Caco-2 (cell line): ENCODE measurements at regions of chrX and their contacts with region 1.

Region 1: GRCh38 chrX:132071260-132071659 is 48.2 kb downstream of the STK26 start:
- DNase-seq: no peak
- H3K4me3 ChIP-seq: no peak overlapping the region
- H3K4me3 Mint-ChIP-seq: no peak overlapping the region
- H3K27ac Mint-ChIP-seq: no peak overlapping the region
- H3K4me1 ChIP-seq: no peaks in the 10 kb centered on the region
- H3K4me1 Mint-ChIP-seq: no peaks in the 10 kb centered on the region
- H3K27me3 ChIP-seq: no peaks in the 10 kb centered on the region
- H3K27me3 Mint-ChIP-seq: no peaks in the 10 kb centered on the region
- CTCF ChIP-seq: peak in 1 of 2 experiments; percentile 12

Region 2: DNA sequence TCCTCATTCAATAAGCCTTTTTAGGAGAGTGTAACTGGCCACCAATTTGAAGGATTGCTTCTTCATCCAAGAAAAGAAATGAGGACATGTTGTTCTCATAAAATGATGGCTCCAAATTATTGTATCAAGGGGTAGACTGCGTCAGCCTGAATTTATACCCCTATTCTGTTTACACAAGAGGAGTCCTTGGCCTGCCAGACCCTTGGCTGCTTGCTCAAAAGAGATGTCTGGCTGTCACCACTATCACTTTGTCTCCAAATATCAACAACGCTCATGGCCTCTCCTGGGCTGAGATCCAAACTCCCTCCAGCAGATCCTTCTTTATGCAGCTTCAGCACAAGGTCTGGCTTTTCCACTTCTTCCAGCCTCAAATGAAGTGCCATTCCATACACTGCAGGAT is 399.5 kb before region 1 on chrX:
- CTCF ChIA-PET with region 1: no interaction called
- POLR2A ChIA-PET with region 1: no interaction called
- intact Hi-C with region 1: no loop called
- DNase-seq: no peak
- H3K4me3 ChIP-seq: no peak overlapping the region
- H3K4me3 Mint-ChIP-seq: no peak overlapping the region
- H3K27ac Mint-ChIP-seq: no peak overlapping the region
- H3K4me1 ChIP-seq: no peaks in the 10 kb centered on the region
- H3K4me1 Mint-ChIP-seq: no peaks in the 10 kb centered on the region
- H3K27me3 ChIP-seq: no peaks in the 10 kb centered on the region
- H3K27me3 Mint-ChIP-seq: no peaks in the 10 kb centered on the region
- CTCF ChIP-seq: no peak

Region 3: GRCh38 chrX:131841496-131842410 is 229.5 kb before region 1 on chrX:
- CTCF ChIA-PET with region 1: interaction called, 14 read pairs
- POLR2A ChIA-PET with region 1: interaction called, 3 read pairs
- intact Hi-C with region 1: loop called (anchors 1 kb)
- DNase-seq: peak; percentile 56 to 66
- H3K4me3 ChIP-seq: no peak overlapping the region
- H3K4me3 Mint-ChIP-seq: no peak overlapping the region
- H3K27ac Mint-ChIP-seq: no peak overlapping the region
- H3K4me1 ChIP-seq: 0 out of 2 replicates have a peak, but pooled peaks cover 4% of the 10 kb centered on the region
- H3K4me1 Mint-ChIP-seq: no peaks in the 10 kb centered on the region
- H3K27me3 ChIP-seq: no peaks in the 10 kb centered on the region
- H3K27me3 Mint-ChIP-seq: no peaks in the 10 kb centered on the region
- CTCF ChIP-seq: peak; percentile 59 to 70

Region 4: GRCh38 chrX:132022967-132023895 is 48.0 kb before region 1 on chrX and contains the start of gene STK26:
- CTCF ChIA-PET with region 1: interaction called, 5 read pairs
- POLR2A ChIA-PET with region 1: no interaction called
- intact Hi-C with region 1: loop called (anchors 2 kb)
- DNase-seq: peak; percentile 79 to 86
- H3K4me3 ChIP-seq: peak within 1 kb of the TSS; percentile 79
- H3K4me3 Mint-ChIP-seq: peak within 1 kb of the TSS; percentile 88
- H3K27ac Mint-ChIP-seq: peak within 1 kb of the TSS; percentile 89
- H3K4me1 ChIP-seq: peaks cover 3% of the 10 kb centered on the region; the same call in 1 of the 2 replicates
- H3K4me1 Mint-ChIP-seq: peaks cover 13% of the 10 kb centered on the region
- H3K27me3 ChIP-seq: no peaks in the 10 kb centered on the region
- H3K27me3 Mint-ChIP-seq: no peaks in the 10 kb centered on the region
- CTCF ChIP-seq: no peak
- total RNA-seq, gene STK26: 36.8 and 37.1 TPM in 2 replicates